ENCODE measurements at regions of chr19 and their contacts with region 1.

Region 1: GRCh38 chr19:55301459-55302317 is 17.9 kb downstream of the BRSK1 start:
- DNase-seq: peak; percentile 98
- ATAC-seq: peak; percentile 69
- H3K4me3 Mint-ChIP-seq: peak overlapping the region; percentile 58
- H3K27ac Mint-ChIP-seq: no peak overlapping the region
- H3K4me1 Mint-ChIP-seq: peaks cover 25% of the 10 kb centered on the region
- H3K27me3 Mint-ChIP-seq: no peaks in the 10 kb centered on the region
- CTCF ChIP-seq: peak; percentile 99

Region 2: DNA sequence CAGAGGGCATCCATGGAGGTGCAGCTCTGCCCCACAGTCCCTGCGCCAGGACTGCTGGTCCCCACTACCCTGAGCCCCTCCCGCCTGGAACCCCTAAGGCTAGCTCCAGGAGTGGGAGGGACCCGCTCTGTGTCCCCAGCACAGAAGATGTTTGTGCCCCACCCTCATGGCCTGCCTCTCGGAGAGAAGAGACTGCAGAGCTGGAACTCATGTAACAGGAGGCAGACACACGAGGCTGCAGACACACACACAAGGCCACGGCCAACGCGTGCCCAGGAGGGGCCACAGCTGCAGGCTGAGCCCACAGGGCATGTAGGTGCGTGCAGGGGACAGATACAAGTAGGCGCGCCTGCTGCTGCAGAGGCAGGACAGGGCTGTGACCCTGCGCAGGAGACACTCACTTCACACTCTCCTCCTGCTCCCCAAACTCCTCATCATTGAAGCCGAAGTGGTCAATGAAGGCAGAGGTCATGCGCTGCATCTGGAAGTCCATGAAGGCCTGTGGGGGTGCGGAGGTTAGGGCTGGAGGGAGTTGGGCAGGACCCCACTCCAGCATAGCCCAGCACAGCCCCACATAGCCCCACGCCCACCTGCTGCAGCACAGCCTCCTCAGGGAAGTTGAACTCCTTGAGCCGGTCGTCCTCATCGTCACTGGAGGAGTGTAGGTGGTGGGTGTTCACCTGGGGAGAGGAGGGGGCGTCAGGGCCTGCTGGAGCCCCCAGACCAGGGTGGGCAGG is 62.5 kb before region 1 on chr19:
- CTCF ChIA-PET with region 1: no interaction called
- POLR2A ChIA-PET with region 1: no interaction called
- DNase-seq: no peak
- ATAC-seq: no peak
- H3K4me3 Mint-ChIP-seq: no peak overlapping the region
- H3K27ac Mint-ChIP-seq: no peak overlapping the region; the same call in 1 of the 2 replicates
- H3K4me1 Mint-ChIP-seq: no peaks in the 10 kb centered on the region
- H3K27me3 Mint-ChIP-seq: no peaks in the 10 kb centered on the region
- CTCF ChIP-seq: no peak

Region 3: GRCh38 chr19:55258828-55259539 is 42.7 kb before region 1 on chr19 and contains the start of gene PPP6R1:
- CTCF ChIA-PET with region 1: interaction called, 10 read pairs
- POLR2A ChIA-PET with region 1: no interaction called
- DNase-seq: peak; percentile 97
- ATAC-seq: peak; percentile 83
- H3K4me3 Mint-ChIP-seq: peak within 1 kb of the TSS; percentile 95
- H3K27ac Mint-ChIP-seq: peak within 1 kb of the TSS; percentile 96
- H3K4me1 Mint-ChIP-seq: peaks cover 48% of the 10 kb centered on the region
- H3K27me3 Mint-ChIP-seq: no peaks in the 10 kb centered on the region
- CTCF ChIP-seq: no peak
- total RNA-seq, gene PPP6R1: 78.4 to 91.8 TPM (median 83.2 TPM) in 3 replicates

Region 4: GRCh38 chr19:55312621-55313512 is 11.2 kb after region 1 on chr19:
- CTCF ChIA-PET with region 1: interaction called, 18 read pairs
- POLR2A ChIA-PET with region 1: no interaction called
- DNase-seq: no peak
- ATAC-seq: no peak; the same call in 1 of the 2 replicates
- H3K4me3 Mint-ChIP-seq: no peak overlapping the region
- H3K27ac Mint-ChIP-seq: peak overlapping the region; percentile 81
- H3K4me1 Mint-ChIP-seq: no peaks in the 10 kb centered on the region
- H3K27me3 Mint-ChIP-seq: peaks cover 5% of the 10 kb centered on the region; the same call in 1 of the 2 replicates
- CTCF ChIP-seq: no peak

Region 5: GRCh38 chr19:55339048-55339888 is 37.6 kb after region 1 on chr19 and contains the start of gene KMT5C:
- CTCF ChIA-PET with region 1: interaction called, 35 read pairs
- POLR2A ChIA-PET with region 1: interaction called, 11 read pairs
- DNase-seq: peak; percentile 100
- ATAC-seq: peak; percentile 89
- H3K4me3 Mint-ChIP-seq: peak within 1 kb of the TSS; percentile 83
- H3K27ac Mint-ChIP-seq: peak within 1 kb of the TSS; percentile 100
- H3K4me1 Mint-ChIP-seq: peaks cover 13% of the 10 kb centered on the region
- H3K27me3 Mint-ChIP-seq: peaks cover 26% of the 10 kb centered on the region
- CTCF ChIP-seq: no peak
- total RNA-seq, gene KMT5C: 49.1 to 63.1 TPM (median 52.3 TPM) in 3 replicates

Region 6: GRCh38 chr19:55385353-55385739 is 83.7 kb after region 1 on chr19:
- CTCF ChIA-PET with region 1: interaction called, 26 read pairs
- POLR2A ChIA-PET with region 1: no interaction called
- DNase-seq: peak; percentile 98
- ATAC-seq: peak; percentile 82
- H3K4me3 Mint-ChIP-seq: peak overlapping the region; percentile 100
- H3K27ac Mint-ChIP-seq: peak overlapping the region; percentile 99
- H3K4me1 Mint-ChIP-seq: peaks cover 43% of the 10 kb centered on the region
- H3K27me3 Mint-ChIP-seq: peaks cover 24% of the 10 kb centered on the region
- CTCF ChIP-seq: no peak

Measured in WTC11 (cell line).